PC-3 (cell line): ENCODE measurements at regions of chr3 and their contacts with region 1.

Region 1: GRCh38 chr3:160449636-160450598 is at the start of gene TRIM59:
- DNase-seq: peak; percentile 97
- ATAC-seq: peak; percentile 87
- H3K4me3 ChIP-seq: peak within 1 kb of the TSS; percentile 76
- H3K27ac ChIP-seq: peak within 1 kb of the TSS; percentile 69
- H3K4me1 ChIP-seq: peaks cover 42% of the 10 kb centered on the region
- H3K27me3 ChIP-seq: no peaks in the 10 kb centered on the region
- CTCF ChIP-seq: no peak
- total RNA-seq, gene TRIM59: 25.3 and 26.4 TPM in 2 replicates

Region 2: DNA sequence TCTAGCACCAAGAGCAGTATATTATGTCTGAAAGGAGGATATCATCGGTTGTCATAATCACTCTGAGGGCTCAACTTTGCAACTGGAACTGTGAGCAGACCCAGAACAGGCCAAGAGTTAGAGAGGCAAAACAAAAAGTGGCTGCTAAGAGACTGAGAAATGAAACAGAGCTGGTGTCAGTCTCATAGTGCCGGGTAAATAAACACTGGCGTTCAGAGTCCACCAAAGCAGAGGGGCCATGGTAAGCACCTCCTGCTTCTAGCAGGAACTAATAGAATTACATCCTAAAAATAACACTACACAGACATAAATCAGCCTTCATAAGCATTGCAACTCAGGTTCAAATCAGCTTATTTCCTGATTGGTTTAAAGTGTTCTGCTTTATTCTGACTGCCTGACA is 471.6 kb before region 1 on chr3:
- CTCF ChIA-PET with region 1: no interaction called
- POLR2A ChIA-PET with region 1: no interaction called
- intact Hi-C with region 1: no loop called
- DNase-seq: no peak
- ATAC-seq: no peak
- H3K4me3 ChIP-seq: no peak overlapping the region
- H3K27ac ChIP-seq: no peak overlapping the region
- H3K4me1 ChIP-seq: no peaks in the 10 kb centered on the region
- H3K27me3 ChIP-seq: no peaks in the 10 kb centered on the region
- CTCF ChIP-seq: no peak

Region 3: DNA sequence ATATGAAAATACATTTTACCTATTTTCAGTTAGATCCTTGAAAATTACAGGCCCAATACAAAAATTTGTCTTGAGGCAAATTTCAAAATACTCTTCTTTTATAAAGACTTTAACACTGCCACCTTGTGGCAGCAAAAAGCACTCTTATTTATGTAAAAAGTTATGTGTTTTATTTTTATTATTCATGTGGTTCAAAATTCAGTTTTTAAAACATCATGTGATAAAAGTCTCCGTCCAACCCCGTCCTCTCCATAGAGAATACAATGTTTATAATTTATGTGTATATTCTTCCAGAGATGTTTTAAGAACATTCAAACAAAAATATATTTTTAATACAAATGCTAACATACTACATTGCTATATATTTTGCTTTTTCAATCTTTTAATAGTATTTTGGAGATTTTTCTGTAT is 36.5 kb after region 1 on chr3:
- CTCF ChIA-PET with region 1: no interaction called
- POLR2A ChIA-PET with region 1: no interaction called
- intact Hi-C with region 1: loop called (anchors 2 kb)
- DNase-seq: peak; percentile 71
- ATAC-seq: peak; percentile 16; the same call in 1 of the 2 replicates
- H3K4me3 ChIP-seq: no peak overlapping the region
- H3K27ac ChIP-seq: no peak overlapping the region
- H3K4me1 ChIP-seq: no peaks in the 10 kb centered on the region
- H3K27me3 ChIP-seq: no peaks in the 10 kb centered on the region
- CTCF ChIP-seq: peak; percentile 78

Region 4: GRCh38 chr3:160544844-160545503 is 95.1 kb after region 1 on chr3:
- CTCF ChIA-PET with region 1: no interaction called
- POLR2A ChIA-PET with region 1: no interaction called
- intact Hi-C with region 1: no loop called
- DNase-seq: peak; percentile 13
- ATAC-seq: no peak; the same call in 1 of the 2 replicates
- H3K4me3 ChIP-seq: no peak overlapping the region
- H3K27ac ChIP-seq: no peak overlapping the region
- H3K4me1 ChIP-seq: no peaks in the 10 kb centered on the region
- H3K27me3 ChIP-seq: no peaks in the 10 kb centered on the region
- CTCF ChIP-seq: no peak

Region 5: GRCh38 chr3:160565442-160566403 is 115.8 kb after region 1 on chr3 and contains the start of gene KPNA4:
- CTCF ChIA-PET with region 1: no interaction called
- POLR2A ChIA-PET with region 1: no interaction called
- intact Hi-C with region 1: loop called (anchors 5 kb)
- DNase-seq: peak; percentile 99
- ATAC-seq: peak; percentile 84
- H3K4me3 ChIP-seq: peak within 1 kb of the TSS; percentile 79
- H3K27ac ChIP-seq: peak within 1 kb of the TSS; percentile 99
- H3K4me1 ChIP-seq: peaks cover 45% of the 10 kb centered on the region
- H3K27me3 ChIP-seq: no peaks in the 10 kb centered on the region
- CTCF ChIP-seq: no peak
- total RNA-seq, gene KPNA4: 31.5 and 33.7 TPM in 2 replicates

Region 6: DNA sequence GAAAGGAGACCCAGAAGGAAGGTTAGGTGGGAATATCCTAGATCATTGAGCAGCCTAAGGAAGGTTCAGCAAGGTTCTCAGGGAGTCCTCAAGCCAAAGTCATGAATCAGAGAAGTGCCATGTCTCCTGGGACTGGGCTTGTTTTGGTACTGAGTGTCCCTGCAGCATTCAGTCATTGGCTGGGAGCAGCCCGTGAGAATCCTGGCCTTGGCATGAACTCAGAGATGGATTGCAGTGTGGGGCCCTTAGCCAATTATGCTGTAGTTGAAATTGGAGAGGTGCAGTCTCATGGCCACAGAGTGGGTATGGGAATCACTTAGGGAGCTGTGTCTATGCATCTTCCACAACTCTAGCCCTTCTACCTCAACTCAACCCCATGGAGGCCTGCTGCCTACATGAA is 289.2 kb after region 1 on chr3:
- CTCF ChIA-PET with region 1: no interaction called
- POLR2A ChIA-PET with region 1: no interaction called
- intact Hi-C with region 1: no loop called
- DNase-seq: no peak
- ATAC-seq: no peak
- H3K4me3 ChIP-seq: no peak overlapping the region
- H3K27ac ChIP-seq: no peak overlapping the region
- H3K4me1 ChIP-seq: no peaks in the 10 kb centered on the region
- H3K27me3 ChIP-seq: no peaks in the 10 kb centered on the region
- CTCF ChIP-seq: no peak